ENCODE measurements at regions of chr9 and their contacts with region 1.

Region 1: GRCh38 chr9:4604678-4605095 is 57.4 kb upstream of the PLPP6 start:
- DNase-seq: peak; percentile 18
- H3K4me3 ChIP-seq: no peak overlapping the region
- H3K27ac ChIP-seq: no peak overlapping the region
- H3K27me3 ChIP-seq: no peaks in the 10 kb centered on the region
- CTCF ChIP-seq: peak; percentile 62

Region 2: GRCh38 chr9:4591123-4591500 is 13.6 kb before region 1 on chr9:
- CTCF ChIA-PET with region 1: interaction called, 11 read pairs
- POLR2A ChIA-PET with region 1: no interaction called
- DNase-seq: no peak
- H3K4me3 ChIP-seq: no peak overlapping the region
- H3K27ac ChIP-seq: no peak overlapping the region
- H3K27me3 ChIP-seq: peaks cover 2% of the 10 kb centered on the region
- CTCF ChIP-seq: no peak

Region 3: GRCh38 chr9:4622016-4622415 is 17.3 kb after region 1 on chr9:
- CTCF ChIA-PET with region 1: interaction called, 10 read pairs
- POLR2A ChIA-PET with region 1: no interaction called
- DNase-seq: no peak
- H3K4me3 ChIP-seq: no peak overlapping the region
- H3K27ac ChIP-seq: no peak overlapping the region
- H3K27me3 ChIP-seq: no peaks in the 10 kb centered on the region
- CTCF ChIP-seq: no peak

Region 4: GRCh38 chr9:4725706-4726442 is 121.2 kb after region 1 on chr9:
- CTCF ChIA-PET with region 1: no interaction called
- POLR2A ChIA-PET with region 1: no interaction called
- DNase-seq: no peak
- H3K4me3 ChIP-seq: no peak overlapping the region
- H3K27ac ChIP-seq: no peak overlapping the region
- H3K27me3 ChIP-seq: no peaks in the 10 kb centered on the region
- CTCF ChIP-seq: no peak

Measured in AG04450 (cell line).